Caco-2 (cell line): ENCODE measurements at regions of chr9 and their contacts with region 1.

Region 1: DNA sequence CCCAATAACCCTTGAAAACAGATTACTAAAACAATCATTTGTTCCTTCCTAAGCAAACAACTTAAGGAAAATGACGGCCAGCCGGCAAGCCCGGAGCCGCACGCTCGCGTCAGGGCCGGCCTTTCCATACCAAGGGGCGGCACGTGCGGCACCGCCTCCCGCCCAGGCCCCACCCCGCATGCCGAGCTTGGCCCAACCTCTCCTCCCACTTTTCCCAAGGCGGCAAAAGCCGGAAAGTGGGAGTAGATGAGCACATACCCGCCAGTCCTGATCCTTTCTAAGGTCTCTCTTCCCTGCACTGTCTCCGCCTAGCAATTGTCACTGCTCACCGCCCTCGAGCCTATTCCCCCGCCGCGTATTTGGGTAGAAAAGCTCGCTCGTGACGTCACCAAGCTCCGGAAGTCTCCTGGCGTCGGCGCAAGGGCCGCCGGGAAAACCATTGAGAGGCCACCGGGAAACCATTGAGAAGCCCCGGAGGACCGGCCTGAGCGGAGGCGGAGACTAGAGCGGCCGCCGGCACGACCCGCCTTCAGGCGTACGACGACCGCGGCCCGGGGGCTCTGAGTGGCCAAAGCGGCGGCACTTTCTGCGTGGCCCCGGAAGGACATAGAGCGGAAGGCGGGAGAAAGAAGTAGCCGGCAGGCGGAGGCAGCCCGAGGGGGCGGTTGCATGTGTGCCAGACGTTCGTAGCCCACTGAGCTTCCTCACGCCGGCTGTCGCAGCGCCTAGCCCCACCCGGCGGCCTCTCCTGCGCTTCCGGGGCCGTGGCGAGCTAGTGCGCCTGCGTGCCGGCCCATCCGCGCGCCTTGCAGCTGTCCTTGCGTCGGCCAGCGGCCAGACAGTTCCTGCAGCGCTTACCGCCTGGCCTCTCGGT is at the starts of genes NCBP1 and TSTD2:
- DNase-seq: peak; percentile 98
- H3K4me3 ChIP-seq: peak within 1 kb of the TSS; percentile 99
- H3K4me3 Mint-ChIP-seq: peak within 1 kb of the TSS; percentile 95
- H3K27ac Mint-ChIP-seq: peak within 1 kb of the TSS; percentile 100
- H3K4me1 ChIP-seq: peaks cover 5% of the 10 kb centered on the region
- H3K4me1 Mint-ChIP-seq: peaks cover 15% of the 10 kb centered on the region
- H3K27me3 ChIP-seq: no peaks in the 10 kb centered on the region
- H3K27me3 Mint-ChIP-seq: no peaks in the 10 kb centered on the region
- CTCF ChIP-seq: no peak
- total RNA-seq, gene NCBP1: 59.7 and 66.9 TPM in 2 replicates
- total RNA-seq, gene TSTD2: 20.7 and 21.4 TPM in 2 replicates

Region 2: GRCh38 chr9:97128919-97129318 is 504.3 kb before region 1 on chr9:
- CTCF ChIA-PET with region 1: no interaction called
- POLR2A ChIA-PET with region 1: no interaction called
- intact Hi-C with region 1: no loop called
- DNase-seq: no peak
- H3K4me3 ChIP-seq: no peak overlapping the region
- H3K4me3 Mint-ChIP-seq: no peak overlapping the region
- H3K27ac Mint-ChIP-seq: no peak overlapping the region
- H3K4me1 ChIP-seq: no peaks in the 10 kb centered on the region
- H3K4me1 Mint-ChIP-seq: no peaks in the 10 kb centered on the region
- H3K27me3 ChIP-seq: no peaks in the 10 kb centered on the region
- H3K27me3 Mint-ChIP-seq: no peaks in the 10 kb centered on the region
- CTCF ChIP-seq: no peak

Region 3: DNA sequence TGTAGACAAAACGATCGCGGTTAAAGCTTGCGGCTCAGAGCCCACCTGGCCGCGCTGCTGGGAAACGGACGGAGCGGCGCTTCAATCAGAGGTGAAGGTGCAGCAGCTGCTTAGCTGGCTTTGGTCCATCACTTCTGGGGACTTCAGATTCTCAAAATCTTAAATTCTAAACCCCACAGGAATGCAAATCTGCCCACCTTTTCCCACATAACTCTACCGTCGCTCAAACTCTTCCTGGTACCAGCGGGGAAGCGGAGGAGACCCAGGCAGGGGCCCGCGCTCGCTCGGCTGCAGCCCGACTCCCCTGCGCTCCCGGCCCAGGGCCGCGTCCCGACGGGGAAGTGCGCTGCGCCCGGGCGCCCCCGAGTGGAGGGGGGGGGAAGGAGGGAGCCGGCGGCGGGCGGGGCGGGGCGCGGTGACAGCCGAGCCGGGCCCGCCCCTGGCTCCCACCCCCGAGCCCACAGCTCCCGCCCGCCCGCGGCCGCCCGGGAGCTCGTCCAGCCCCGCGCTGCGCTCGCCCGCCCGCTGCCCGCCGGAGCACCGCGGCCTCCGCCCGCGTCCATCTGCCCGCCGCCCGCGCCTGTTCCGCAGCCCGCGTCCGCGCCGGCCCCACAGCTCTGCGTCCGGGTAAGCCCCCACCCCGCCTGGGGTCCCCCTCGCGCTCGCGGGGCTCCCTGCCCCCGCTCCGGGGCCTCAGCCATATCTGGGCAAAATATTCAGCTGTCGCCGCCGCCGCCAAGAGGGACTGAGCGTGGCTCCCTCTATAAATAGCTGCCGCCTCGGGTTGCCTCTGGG is 131.8 kb before region 1 on chr9 and contains the start of gene TMOD1:
- CTCF ChIA-PET with region 1: interaction called, 11 read pairs
- POLR2A ChIA-PET with region 1: interaction called, 11 read pairs
- intact Hi-C with region 1: no loop called
- DNase-seq: peak; percentile 61 to 83
- H3K4me3 ChIP-seq: peak within 1 kb of the TSS; percentile 61
- H3K4me3 Mint-ChIP-seq: peak within 1 kb of the TSS; percentile 73
- H3K27ac Mint-ChIP-seq: no peak within 1 kb of the TSS
- H3K4me1 ChIP-seq: no peaks in the 10 kb centered on the region; the same call in 1 of the 2 replicates
- H3K4me1 Mint-ChIP-seq: no peaks in the 10 kb centered on the region
- H3K27me3 ChIP-seq: peaks cover 5% of the 10 kb centered on the region; the same call in 1 of the 2 replicates
- H3K27me3 Mint-ChIP-seq: peaks cover 19% of the 10 kb centered on the region
- CTCF ChIP-seq: peak in 1 of 2 experiments; percentile 30
- total RNA-seq, gene TMOD1: 1.00 and 1.1 TPM in 2 replicates

Region 4: GRCh38 chr9:97660340-97660739 is 27.1 kb after region 1 on chr9:
- CTCF ChIA-PET with region 1: no interaction called
- POLR2A ChIA-PET with region 1: no interaction called
- intact Hi-C with region 1: no loop called
- DNase-seq: no peak
- H3K4me3 ChIP-seq: no peak overlapping the region
- H3K4me3 Mint-ChIP-seq: no peak overlapping the region
- H3K27ac Mint-ChIP-seq: no peak overlapping the region
- H3K4me1 ChIP-seq: no peaks in the 10 kb centered on the region
- H3K4me1 Mint-ChIP-seq: no peaks in the 10 kb centered on the region
- H3K27me3 ChIP-seq: no peaks in the 10 kb centered on the region
- H3K27me3 Mint-ChIP-seq: no peaks in the 10 kb centered on the region
- CTCF ChIP-seq: no peak

Region 5: GRCh38 chr9:97696803-97697601 is 63.8 kb after region 1 on chr9 and contains the start of gene XPA:
- CTCF ChIA-PET with region 1: interaction called, 3 read pairs
- POLR2A ChIA-PET with region 1: interaction called, 12 read pairs
- intact Hi-C with region 1: loop called (anchors 2 kb)
- DNase-seq: peak; percentile 98
- H3K4me3 ChIP-seq: peak within 1 kb of the TSS; percentile 66
- H3K4me3 Mint-ChIP-seq: peak within 1 kb of the TSS; percentile 78
- H3K27ac Mint-ChIP-seq: peak within 1 kb of the TSS; percentile 68
- H3K4me1 ChIP-seq: peaks cover 14% of the 10 kb centered on the region; the same call in 1 of the 2 replicates
- H3K4me1 Mint-ChIP-seq: peaks cover 41% of the 10 kb centered on the region
- H3K27me3 ChIP-seq: no peaks in the 10 kb centered on the region
- H3K27me3 Mint-ChIP-seq: no peaks in the 10 kb centered on the region
- CTCF ChIP-seq: no peak
- total RNA-seq, gene XPA: 15.6 and 18.8 TPM in 2 replicates

Region 6: GRCh38 chr9:97773723-97774122 is 140.5 kb after region 1 on chr9:
- CTCF ChIA-PET with region 1: no interaction called
- POLR2A ChIA-PET with region 1: no interaction called
- intact Hi-C with region 1: no loop called
- DNase-seq: no peak
- H3K4me3 ChIP-seq: no peak overlapping the region
- H3K4me3 Mint-ChIP-seq: no peak overlapping the region
- H3K27ac Mint-ChIP-seq: no peak overlapping the region
- H3K4me1 ChIP-seq: peaks cover 14% of the 10 kb centered on the region; the same call in 1 of the 2 replicates
- H3K4me1 Mint-ChIP-seq: peaks cover 20% of the 10 kb centered on the region
- H3K27me3 ChIP-seq: no peaks in the 10 kb centered on the region
- H3K27me3 Mint-ChIP-seq: no peaks in the 10 kb centered on the region
- CTCF ChIP-seq: no peak

Region 7: DNA sequence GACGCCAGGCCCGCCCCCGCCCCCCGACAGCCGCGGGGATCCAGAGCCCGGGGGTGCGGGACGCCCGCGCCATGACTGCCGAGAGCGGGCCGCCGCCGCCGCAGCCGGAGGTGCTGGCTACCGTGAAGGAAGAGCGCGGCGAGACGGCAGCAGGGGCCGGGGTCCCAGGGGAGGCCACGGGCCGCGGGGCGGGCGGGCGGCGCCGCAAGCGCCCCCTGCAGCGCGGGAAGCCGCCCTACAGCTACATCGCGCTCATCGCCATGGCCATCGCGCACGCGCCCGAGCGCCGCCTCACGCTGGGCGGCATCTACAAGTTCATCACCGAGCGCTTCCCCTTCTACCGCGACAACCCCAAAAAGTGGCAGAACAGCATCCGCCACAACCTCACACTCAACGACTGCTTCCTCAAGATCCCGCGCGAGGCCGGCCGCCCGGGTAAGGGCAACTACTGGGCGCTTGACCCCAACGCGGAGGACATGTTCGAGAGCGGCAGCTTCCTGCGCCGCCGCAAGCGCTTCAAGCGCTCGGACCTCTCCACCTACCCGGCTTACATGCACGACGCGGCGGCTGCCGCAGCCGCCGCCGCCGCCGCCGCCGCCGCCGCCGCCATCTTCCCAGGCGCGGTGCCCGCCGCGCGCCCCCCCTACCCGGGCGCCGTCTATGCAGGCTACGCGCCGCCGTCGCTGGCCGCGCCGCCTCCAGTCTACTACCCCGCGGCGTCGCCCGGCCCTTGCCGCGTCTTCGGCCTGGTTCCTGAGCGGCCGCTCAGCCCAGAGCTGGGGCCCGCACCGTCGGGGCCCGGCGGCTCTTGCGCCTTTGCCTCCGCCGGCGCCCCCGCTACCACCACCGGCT is 220.8 kb after region 1 on chr9:
- CTCF ChIA-PET with region 1: no interaction called
- POLR2A ChIA-PET with region 1: no interaction called
- intact Hi-C with region 1: no loop called
- DNase-seq: no peak
- H3K4me3 ChIP-seq: no peak overlapping the region
- H3K4me3 Mint-ChIP-seq: no peak overlapping the region
- H3K27ac Mint-ChIP-seq: no peak overlapping the region
- H3K4me1 ChIP-seq: no peaks in the 10 kb centered on the region
- H3K4me1 Mint-ChIP-seq: no peaks in the 10 kb centered on the region
- H3K27me3 ChIP-seq: no peaks in the 10 kb centered on the region
- H3K27me3 Mint-ChIP-seq: no peaks in the 10 kb centered on the region
- CTCF ChIP-seq: no peak

Region 8: DNA sequence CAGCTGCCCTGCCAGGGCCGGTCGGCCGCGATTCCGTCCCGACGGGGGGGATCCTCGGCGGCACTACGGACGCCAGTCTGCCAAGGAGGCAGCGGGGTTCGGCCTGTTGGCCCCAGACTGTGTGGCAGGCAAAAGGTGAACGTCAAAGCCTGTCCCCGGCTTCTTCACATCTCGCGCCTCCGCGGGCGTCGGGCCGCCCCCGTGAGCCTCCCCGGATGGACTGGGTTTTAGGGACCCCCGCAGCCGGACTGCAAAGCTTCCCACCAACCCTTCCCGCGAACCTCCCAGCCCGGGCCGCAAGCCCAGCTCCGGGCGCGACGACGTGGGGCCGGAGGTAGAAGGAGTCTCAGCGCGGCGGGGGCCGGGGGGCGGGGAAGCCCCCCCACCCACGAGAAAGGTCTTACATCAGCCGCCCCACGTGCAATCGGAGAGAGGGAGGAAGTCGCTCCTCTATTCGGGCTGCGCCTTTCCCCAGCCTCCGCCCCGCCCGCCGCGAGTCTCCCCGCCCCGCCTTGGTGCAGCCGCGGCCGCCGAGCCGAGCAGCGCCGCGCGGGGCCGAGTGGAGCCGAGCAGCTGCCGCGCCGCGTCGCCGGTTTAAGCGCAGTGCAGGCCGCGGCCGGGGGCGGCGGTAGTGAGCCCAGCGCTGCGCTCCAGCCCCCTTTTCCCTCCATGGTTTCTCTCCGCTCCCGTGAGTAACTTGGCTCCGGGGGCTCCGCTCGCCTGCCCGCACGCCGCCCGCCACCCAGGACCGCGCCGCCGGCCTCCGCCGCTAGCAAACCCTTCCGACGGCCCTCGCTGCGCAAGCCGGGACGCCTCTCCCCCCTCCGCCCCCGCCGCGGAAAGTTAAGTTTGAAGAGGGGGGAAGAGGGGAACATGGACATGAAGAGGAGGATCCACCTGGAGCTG is 349.7 kb after region 1 on chr9 and contains the start of gene ANP32B:
- CTCF ChIA-PET with region 1: no interaction called
- POLR2A ChIA-PET with region 1: interaction called, 15 read pairs
- intact Hi-C with region 1: loop called (anchors 5 kb)
- DNase-seq: peak; percentile 95 to 96
- H3K4me3 ChIP-seq: peak within 1 kb of the TSS; percentile 96
- H3K4me3 Mint-ChIP-seq: peak within 1 kb of the TSS; percentile 79
- H3K27ac Mint-ChIP-seq: peak within 1 kb of the TSS; percentile 84
- H3K4me1 ChIP-seq: peaks cover 10% of the 10 kb centered on the region
- H3K4me1 Mint-ChIP-seq: peaks cover 28% of the 10 kb centered on the region
- H3K27me3 ChIP-seq: no peaks in the 10 kb centered on the region
- H3K27me3 Mint-ChIP-seq: no peaks in the 10 kb centered on the region
- CTCF ChIP-seq: peak; percentile 64 to 96
- total RNA-seq, gene ANP32B: 299 and 317 TPM in 2 replicates